ENCODE measurements at regions of chr7 and their contacts with region 1.

Region 1: DNA sequence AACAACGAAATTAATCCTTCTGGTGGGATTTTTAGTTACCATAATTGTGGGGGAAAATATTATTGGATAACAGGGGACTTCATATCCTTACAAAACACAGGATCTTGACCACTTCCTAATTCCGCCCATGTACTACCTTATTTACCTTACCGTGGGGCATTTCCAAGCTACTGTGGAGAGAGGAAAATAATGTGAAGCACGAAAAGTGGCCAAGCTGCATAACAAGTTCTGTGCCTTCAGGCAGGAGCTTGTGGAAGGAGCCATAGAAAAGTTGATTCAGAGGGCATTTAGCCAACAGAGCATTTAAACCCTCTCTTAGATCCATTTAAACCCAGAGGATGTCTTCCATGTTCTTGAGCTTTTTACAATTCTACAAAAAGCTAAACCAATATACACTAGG is 41.6 kb downstream of the DNAJB9 start:
- DNase-seq: no peak
- ATAC-seq: no peak
- H3K4me3 ChIP-seq: no peak overlapping the region
- H3K27ac ChIP-seq: no peak overlapping the region
- H3K4me1 ChIP-seq: no peaks in the 10 kb centered on the region
- CTCF ChIP-seq: no peak
- EP300 ChIP-seq: no peak
- POLR2A ChIP-seq: no peak
- RAD21 ChIP-seq: no peak

Region 2: DNA sequence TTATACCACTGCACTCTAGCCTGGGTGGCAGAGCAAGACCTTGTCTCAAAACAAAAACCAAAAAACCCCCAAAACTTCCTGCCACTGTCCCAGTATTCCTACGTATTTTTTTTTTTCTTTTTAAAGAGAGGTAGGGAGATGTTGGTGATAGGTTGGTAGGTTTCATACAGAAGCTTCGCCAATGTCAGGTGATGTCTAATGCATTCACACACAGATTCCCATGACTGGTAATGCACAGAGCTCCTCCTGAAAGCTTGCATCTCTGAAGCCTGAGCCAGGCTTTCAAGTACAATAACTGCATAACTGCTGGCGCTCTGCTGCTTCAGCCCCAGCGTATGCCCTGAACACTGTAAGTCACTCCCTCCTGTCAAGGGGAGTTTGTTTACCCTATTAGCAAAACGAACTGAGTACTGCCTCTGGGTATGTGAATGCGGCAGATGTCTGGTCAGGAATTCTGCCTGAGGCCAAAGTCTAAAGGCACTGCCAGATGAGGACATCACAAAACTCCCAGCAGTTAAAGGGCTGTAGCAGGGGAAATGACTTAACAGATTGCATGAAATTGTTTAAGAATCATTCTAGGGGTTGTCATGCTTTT is 252.8 kb before region 1 on chr7:
- CTCF ChIA-PET with region 1: no interaction called
- POLR2A ChIA-PET with region 1: no interaction called
- DNase-seq: peak; percentile 29 to 89
- ATAC-seq: peak; percentile 100
- H3K4me3 ChIP-seq: no peak overlapping the region
- H3K27ac ChIP-seq: peak overlapping the region; percentile 54 to 69
- H3K4me1 ChIP-seq: peaks cover 32% of the 10 kb centered on the region
- CTCF ChIP-seq: no peak
- EP300 ChIP-seq: peak; percentile 37 to 46; a peak in 2 of 5 replicates
- POLR2A ChIP-seq: no peak
- RAD21 ChIP-seq: peak; percentile 8 to 37; a peak in 2 of 5 replicates

Region 3: DNA sequence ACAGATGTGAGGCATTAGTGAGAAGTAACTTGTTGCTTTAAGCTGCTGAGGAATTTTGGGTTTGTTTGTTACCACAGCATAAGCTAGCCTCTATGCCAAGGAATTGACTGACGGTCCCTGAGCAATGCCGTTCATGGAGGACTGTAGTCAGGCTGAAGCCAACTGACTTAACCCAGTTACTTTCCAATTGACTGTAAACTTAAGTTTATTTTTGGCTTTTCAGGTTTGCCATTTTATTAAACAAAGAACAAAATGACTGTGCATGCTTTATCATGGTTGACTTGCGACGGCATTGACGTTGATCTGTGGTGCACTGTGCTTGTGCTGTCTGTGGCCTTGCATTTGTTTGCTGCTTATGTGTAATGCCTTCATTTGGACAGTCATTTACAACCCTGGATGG is 12.0 kb after region 1 on chr7:
- CTCF ChIA-PET with region 1: interaction called, 10 read pairs
- POLR2A ChIA-PET with region 1: no interaction called
- DNase-seq: no peak
- ATAC-seq: no peak
- H3K4me3 ChIP-seq: no peak overlapping the region
- H3K27ac ChIP-seq: no peak overlapping the region
- H3K4me1 ChIP-seq: no peaks in the 10 kb centered on the region
- CTCF ChIP-seq: no peak
- EP300 ChIP-seq: no peak
- POLR2A ChIP-seq: no peak
- RAD21 ChIP-seq: no peak

Measured in A549 (cell line).